HepG2 (cell line): ENCODE measurements at regions of chr7 and their contacts with region 1.

Region 1: DNA sequence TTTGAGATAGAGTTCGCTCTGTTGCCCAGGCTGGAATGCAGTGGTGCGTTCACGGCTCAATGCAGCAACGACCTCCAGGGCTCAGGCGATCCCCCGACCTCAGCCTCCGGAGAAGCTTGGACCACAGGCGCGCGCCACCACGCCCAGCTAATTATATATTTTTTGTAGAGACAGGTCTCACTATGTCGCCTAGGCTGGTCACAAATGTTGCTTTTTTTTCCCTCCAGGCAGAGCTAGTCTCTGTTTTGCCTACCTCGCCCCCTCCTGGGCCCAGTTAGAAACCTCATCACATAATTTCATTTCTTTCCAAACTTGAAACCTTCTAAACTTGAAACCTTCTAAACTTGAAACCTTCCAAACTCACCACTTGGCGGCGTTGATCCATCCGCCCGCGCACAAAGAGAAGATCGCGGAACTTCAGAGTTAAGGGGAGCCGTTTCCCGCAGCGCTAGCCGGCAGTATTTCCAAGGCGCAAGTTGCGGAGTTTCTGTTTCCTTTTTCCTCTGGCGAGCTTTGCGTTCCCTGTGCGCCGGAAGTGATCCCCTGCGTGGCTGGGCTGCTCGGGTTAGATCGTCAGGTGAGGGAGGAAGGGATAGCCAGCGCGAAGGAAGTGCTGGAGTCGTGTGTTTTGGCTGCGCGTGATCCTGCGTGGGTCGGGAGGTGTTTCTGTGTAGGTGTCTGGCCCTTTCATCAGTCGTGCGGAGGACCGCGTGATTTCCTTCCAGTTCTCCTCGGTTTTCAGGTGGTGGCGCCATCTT is at the start of gene SSBP1:
- DNase-seq: peak; percentile 94
- ATAC-seq: peak; percentile 95
- H3K4me3 ChIP-seq: peak within 1 kb of the TSS; percentile 84 to 93 (median 85)
- H3K27ac ChIP-seq: peak within 1 kb of the TSS; percentile 81
- H3K4me1 ChIP-seq: peaks cover 29% of the 10 kb centered on the region
- H3K27me3 ChIP-seq: no peaks in the 10 kb centered on the region; a peak in 1 of 5 replicates
- CTCF ChIP-seq: peak; percentile 84
- EP300 ChIP-seq: peak; percentile 48 to 70; a peak in 2 of 4 replicates
- POLR2A ChIP-seq: peak; percentile 94 to 97
- RAD21 ChIP-seq: no peak
- total RNA-seq, gene SSBP1: 254 and 363 TPM in 2 replicates

Region 2: GRCh38 chr7:141551094-141551781 is 186.8 kb before region 1 on chr7 and contains the start of gene AGK:
- CTCF ChIA-PET with region 1: no interaction called
- POLR2A ChIA-PET with region 1: interaction called, 6 read pairs
- in situ Hi-C with region 1: no loop called
- intact Hi-C with region 1: loop called (anchors 1 kb)
- DNase-seq: peak; percentile 53
- ATAC-seq: peak; percentile 99
- H3K4me3 ChIP-seq: peak within 1 kb of the TSS; percentile 84 to 98 (median 84)
- H3K27ac ChIP-seq: peak within 1 kb of the TSS; percentile 19
- H3K4me1 ChIP-seq: peaks cover 17% of the 10 kb centered on the region
- H3K27me3 ChIP-seq: no peaks in the 10 kb centered on the region; a peak in 1 of 5 replicates
- CTCF ChIP-seq: peak; percentile 19; the same call in 1 of the 2 replicates
- EP300 ChIP-seq: peak in 1 of 2 experiments; percentile 45; a peak in 1 of 4 replicates
- POLR2A ChIP-seq: peak; percentile 79 to 95
- RAD21 ChIP-seq: peak; percentile 47; the same call in 1 of the 2 replicates
- total RNA-seq, gene AGK: 30.1 and 35.7 TPM in 2 replicates

Region 3: GRCh38 chr7:141695803-141696289 is 42.2 kb before region 1 on chr7:
- CTCF ChIA-PET with region 1: no interaction called
- POLR2A ChIA-PET with region 1: interaction called, 18 read pairs
- in situ Hi-C with region 1: no loop called
- intact Hi-C with region 1: loop called (anchors 2 kb)
- DNase-seq: peak; percentile 77
- ATAC-seq: peak; percentile 98
- H3K4me3 ChIP-seq: no peak overlapping the region; a peak in 1 of 6 replicates
- H3K27ac ChIP-seq: peak overlapping the region; percentile 8
- H3K4me1 ChIP-seq: peaks cover 43% of the 10 kb centered on the region
- H3K27me3 ChIP-seq: no peaks in the 10 kb centered on the region
- CTCF ChIP-seq: no peak
- EP300 ChIP-seq: peak in 1 of 2 experiments; percentile 73; a peak in 1 of 4 replicates
- POLR2A ChIP-seq: no peak
- RAD21 ChIP-seq: no peak

Region 4: DNA sequence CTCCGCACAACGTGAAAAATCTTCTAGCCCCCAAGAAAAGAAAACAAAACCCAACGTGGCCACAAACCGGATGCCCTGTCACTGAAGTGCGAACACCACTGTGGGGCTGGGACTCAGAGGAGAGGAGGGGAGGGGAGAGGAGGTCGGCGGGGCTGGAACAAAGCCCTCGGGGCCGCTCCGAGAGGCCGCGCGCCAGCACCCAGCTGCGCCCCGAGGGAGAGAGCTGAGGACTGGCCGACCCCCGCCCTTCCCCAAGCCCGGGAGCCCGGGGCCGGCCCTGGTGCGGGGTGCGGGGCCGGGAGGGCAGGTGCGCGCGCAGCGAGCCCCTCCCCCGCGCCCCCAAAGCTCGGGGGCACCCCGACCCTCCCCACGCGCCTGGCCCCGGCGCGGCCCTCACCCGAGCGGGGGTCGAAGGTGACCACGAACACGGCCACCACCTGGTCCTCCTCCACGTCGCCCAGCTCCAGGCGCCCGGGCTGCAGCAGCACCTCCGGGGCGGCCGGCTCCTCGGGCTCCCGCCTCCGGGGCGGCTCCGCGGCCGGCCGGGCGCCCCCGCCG is 36.4 kb before region 1 on chr7:
- CTCF ChIA-PET with region 1: no interaction called
- POLR2A ChIA-PET with region 1: interaction called, 18 read pairs
- in situ Hi-C with region 1: no loop called
- intact Hi-C with region 1: loop called (anchors 2 kb)
- DNase-seq: no peak
- ATAC-seq: peak; percentile 86
- H3K4me3 ChIP-seq: peak overlapping the region; percentile 72 to 85 (median 76); a peak in 5 of 6 replicates
- H3K27ac ChIP-seq: no peak overlapping the region
- H3K4me1 ChIP-seq: peaks cover 49% of the 10 kb centered on the region
- H3K27me3 ChIP-seq: peaks cover 0 to 19% of the 10 kb centered on the region in 2 experiments; a peak in 3 of 5 replicates
- CTCF ChIP-seq: no peak
- EP300 ChIP-seq: no peak
- POLR2A ChIP-seq: peak in 1 of 2 experiments; percentile 10; a peak in 2 of 4 replicates
- RAD21 ChIP-seq: no peak

Region 5: GRCh38 chr7:142030294-142030693 is 292.3 kb after region 1 on chr7:
- CTCF ChIA-PET with region 1: no interaction called
- POLR2A ChIA-PET with region 1: no interaction called
- in situ Hi-C with region 1: no loop called
- intact Hi-C with region 1: no loop called
- DNase-seq: peak; percentile 3
- ATAC-seq: no peak
- H3K4me3 ChIP-seq: no peak overlapping the region
- H3K27ac ChIP-seq: no peak overlapping the region
- H3K4me1 ChIP-seq: no peaks in the 10 kb centered on the region
- H3K27me3 ChIP-seq: no peaks in the 10 kb centered on the region
- CTCF ChIP-seq: no peak
- EP300 ChIP-seq: no peak
- POLR2A ChIP-seq: no peak
- RAD21 ChIP-seq: no peak